GM10248 (cell line): ENCODE measurements at regions of chr12 and their contacts with region 1.

Region 1: DNA sequence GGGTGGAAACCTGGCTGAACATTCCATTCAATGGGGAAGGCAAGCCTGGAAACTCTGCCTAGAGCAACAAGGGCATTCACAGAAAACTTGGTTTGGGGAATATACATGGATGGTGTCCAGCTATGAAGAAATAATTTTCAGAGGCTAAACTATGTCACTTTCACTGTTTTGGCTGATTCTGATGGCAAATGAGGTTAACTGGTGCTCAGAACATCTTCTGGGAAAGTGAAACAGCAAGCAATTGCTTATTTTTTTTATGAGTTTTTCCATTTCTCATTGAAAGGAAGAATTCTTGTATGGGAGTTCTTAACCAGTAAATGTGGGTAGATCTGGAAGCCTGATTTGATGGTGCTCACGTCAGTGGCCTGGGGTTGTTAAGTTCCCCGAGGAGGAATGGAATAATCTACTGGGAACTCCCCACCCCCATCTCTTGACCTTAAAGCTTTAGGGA is 132.8 kb upstream of the BTG1 start:
- DNase-seq: no peak
- CTCF ChIP-seq: no peak

Region 2: GRCh38 chr12:92259852-92260251 is 18.6 kb before region 1 on chr12:
- CTCF ChIA-PET with region 1: interaction called, 10 read pairs
- POLR2A ChIA-PET with region 1: no interaction called
- DNase-seq: no peak
- CTCF ChIP-seq: no peak

Region 3: DNA sequence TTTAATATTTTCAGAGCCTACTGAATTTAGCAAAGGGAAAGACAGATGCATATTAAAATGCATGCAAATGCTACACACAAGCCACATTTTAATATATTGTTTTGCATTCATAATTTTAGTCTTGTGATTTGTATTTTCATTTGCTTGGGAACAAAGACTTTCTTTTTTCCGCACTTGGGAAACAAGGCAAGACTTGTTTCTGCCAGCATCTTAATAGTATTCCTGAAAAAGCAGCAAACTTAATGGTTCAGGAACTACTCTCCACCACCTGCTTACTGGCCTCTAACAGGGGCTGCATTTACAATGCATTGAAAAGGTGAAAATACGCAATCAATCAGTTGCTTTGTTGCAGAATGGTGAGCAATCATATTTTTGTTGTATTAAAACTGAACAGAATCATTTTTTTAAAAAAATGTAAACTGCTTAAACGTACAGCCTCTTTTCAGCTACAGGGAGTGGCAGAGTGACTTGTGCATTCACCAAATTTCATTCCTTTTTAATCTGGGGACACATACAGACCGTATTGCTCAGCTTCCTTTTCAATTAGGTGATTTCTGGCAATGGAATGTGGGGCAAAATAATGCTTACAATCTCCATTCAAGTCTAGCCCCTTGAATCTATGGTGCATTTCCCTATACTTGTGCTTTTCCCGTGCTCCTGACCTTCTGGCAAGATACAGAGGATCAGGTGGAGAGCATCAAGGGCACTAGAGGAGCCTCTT is 11.4 kb after region 1 on chr12:
- CTCF ChIA-PET with region 1: interaction called, 21 read pairs
- POLR2A ChIA-PET with region 1: no interaction called
- DNase-seq: no peak
- CTCF ChIP-seq: no peak

Region 4: DNA sequence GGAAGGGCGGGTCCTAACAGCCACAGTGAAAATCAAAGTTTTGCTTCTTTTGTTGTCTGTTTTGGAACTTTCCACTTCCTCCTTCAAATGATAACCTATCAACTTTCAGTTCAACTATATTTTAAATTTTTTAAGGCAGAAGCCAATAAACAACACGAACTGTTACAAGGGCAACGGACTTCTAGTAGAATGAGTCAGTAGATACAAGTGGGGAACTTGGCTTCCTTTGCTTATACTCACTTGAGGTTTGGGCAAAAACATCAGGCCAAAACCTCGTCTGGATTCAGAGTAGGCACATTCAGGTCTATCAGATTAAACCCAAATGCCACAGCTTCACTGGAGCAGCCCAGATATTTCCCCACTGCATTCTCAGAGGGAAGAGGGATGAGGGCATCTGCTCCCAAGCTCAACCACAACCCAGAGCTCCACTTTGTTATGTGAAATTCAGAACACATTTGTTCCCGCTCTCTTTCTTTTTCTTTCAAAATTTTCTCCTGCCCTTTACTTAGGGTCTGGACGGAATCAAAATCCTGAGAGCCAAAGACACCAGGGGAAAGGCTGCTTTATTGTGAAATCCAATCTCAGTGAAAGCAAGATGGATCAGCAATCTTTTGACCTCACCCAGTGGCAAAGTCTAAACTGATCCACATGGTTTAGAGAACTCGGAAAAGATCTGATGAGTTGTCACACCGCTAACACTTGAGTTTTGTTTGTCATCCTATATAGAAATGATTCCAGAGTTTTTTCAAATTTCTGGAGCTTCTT is 19.7 kb after region 1 on chr12:
- CTCF ChIA-PET with region 1: interaction called, 17 read pairs
- POLR2A ChIA-PET with region 1: no interaction called
- DNase-seq: peak; percentile 27
- CTCF ChIP-seq: no peak

Region 5: GRCh38 chr12:92593734-92594402 is 315.5 kb after region 1 on chr12:
- CTCF ChIA-PET with region 1: no interaction called
- POLR2A ChIA-PET with region 1: no interaction called
- DNase-seq: peak; percentile 79
- CTCF ChIP-seq: no peak